ENCODE measurements at regions of chr20 and their contacts with region 1.

Region 1: GRCh38 chr20:44609511-44610312 is 27.3 kb downstream of the PKIG start:
- DNase-seq: peak; percentile 71
- H3K4me3 Mint-ChIP-seq: no peak overlapping the region
- H3K27ac Mint-ChIP-seq: peak overlapping the region; percentile 72
- H3K4me1 Mint-ChIP-seq: peaks cover 9% of the 10 kb centered on the region
- H3K27me3 Mint-ChIP-seq: no peaks in the 10 kb centered on the region

Region 2: DNA sequence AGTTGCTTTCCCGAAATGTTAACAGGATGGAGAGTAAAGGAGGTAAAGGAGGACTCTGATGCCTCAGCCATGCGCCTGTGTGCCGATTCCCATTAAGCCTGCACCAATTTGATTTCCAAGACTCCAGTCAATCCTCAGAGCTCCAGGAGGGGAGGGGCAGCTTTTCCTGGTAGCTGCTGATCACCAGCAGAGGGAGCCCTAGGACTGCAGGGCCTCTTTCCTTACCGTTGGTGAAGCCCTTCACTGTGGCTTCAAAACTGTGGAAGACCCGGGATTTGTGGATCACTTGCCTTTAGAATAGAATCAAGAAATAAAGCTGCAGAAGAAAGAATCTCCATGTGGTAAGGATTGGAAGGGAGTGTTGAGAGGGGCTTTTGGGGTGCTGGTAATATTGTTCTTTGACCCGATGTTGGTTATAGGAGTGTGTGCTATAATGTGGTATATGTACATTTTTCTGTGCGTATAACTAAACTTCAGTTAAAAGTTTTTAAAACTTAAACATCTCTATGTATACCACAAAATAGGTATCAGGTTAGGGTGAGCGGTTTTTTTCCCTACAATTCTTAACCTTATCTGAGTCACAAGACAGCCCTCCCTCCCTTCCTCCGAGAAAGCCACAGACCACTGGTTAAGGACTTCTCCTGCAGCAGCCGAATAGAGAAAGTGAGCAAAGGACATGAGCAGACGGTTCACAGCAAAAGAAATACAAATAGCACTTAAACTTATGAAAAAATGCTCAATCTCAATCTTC is 392.2 kb before region 1 on chr20:
- intact Hi-C with region 1: loop called (anchors 5 kb)
- DNase-seq: peak; percentile 58
- H3K4me3 Mint-ChIP-seq: peak overlapping the region; percentile 81
- H3K27ac Mint-ChIP-seq: peak overlapping the region; percentile 72
- H3K4me1 Mint-ChIP-seq: peaks cover 45% of the 10 kb centered on the region
- H3K27me3 Mint-ChIP-seq: no peaks in the 10 kb centered on the region

Region 3: GRCh38 chr20:44475694-44476560 is 133.8 kb before region 1 on chr20 and contains the start of gene TTPAL:
- intact Hi-C with region 1: loop called (anchors 5 kb)
- DNase-seq: peak; percentile 86
- H3K4me3 Mint-ChIP-seq: peak within 1 kb of the TSS; percentile 95
- H3K27ac Mint-ChIP-seq: peak within 1 kb of the TSS; percentile 94
- H3K4me1 Mint-ChIP-seq: peaks cover 17% of the 10 kb centered on the region
- H3K27me3 Mint-ChIP-seq: no peaks in the 10 kb centered on the region
- total RNA-seq, gene TTPAL: 19.7 and 20.8 TPM in 2 replicates

Region 4: DNA sequence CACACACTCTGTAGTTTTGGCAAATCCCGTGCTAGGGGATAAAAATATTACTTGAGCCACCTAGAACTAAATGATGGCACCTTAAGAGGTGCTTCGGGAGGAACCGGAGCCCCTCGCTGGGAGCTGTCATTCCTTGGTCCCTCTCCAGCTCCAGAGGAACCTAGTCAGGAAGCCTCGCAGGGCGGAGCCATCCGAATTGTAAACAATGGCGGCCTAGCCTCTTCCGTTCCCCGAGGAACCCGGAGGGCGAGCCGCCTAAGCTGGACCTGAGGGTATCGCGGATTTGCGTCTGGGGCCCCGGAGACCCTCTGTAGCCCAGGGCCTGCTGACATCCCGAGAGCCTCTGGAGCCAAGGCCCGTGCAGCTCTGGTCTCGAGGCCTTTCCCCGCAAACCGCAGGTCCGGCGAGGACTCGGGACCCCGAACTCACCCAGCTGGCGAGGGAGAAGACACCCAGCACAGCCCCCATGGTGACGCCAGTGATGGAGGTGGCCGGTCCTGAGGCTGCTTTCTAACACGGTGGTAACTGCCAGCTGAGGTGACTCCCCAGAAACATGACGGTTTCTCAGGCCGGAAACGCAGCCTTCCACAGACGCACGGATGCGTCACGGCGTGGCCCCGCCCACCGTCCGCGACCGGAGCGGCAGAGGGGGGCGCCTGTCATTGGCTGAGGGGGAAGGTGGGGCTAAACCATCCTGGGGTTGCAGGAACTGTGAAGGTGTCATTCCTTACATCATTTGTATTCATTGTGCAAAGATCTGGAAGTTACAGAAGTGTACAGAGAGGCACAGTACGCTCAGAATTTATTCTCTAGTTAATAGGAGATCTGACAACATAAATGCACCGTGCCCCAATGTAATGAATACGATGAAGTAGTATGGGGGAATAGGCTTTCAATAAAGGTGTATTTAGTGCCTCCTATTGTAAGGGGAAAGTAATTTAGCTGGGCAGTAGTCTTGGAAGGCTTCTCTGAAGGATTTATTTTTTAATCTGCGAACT is 87.9 kb before region 1 on chr20 and contains the start of gene SERINC3:
- intact Hi-C with region 1: loop called (anchors 1 kb)
- DNase-seq: peak; percentile 96
- H3K4me3 Mint-ChIP-seq: peak within 1 kb of the TSS; percentile 81
- H3K27ac Mint-ChIP-seq: peak within 1 kb of the TSS; percentile 79
- H3K4me1 Mint-ChIP-seq: peaks cover 38% of the 10 kb centered on the region
- H3K27me3 Mint-ChIP-seq: no peaks in the 10 kb centered on the region
- total RNA-seq, gene SERINC3: 51.2 and 52.5 TPM in 2 replicates

Region 5: DNA sequence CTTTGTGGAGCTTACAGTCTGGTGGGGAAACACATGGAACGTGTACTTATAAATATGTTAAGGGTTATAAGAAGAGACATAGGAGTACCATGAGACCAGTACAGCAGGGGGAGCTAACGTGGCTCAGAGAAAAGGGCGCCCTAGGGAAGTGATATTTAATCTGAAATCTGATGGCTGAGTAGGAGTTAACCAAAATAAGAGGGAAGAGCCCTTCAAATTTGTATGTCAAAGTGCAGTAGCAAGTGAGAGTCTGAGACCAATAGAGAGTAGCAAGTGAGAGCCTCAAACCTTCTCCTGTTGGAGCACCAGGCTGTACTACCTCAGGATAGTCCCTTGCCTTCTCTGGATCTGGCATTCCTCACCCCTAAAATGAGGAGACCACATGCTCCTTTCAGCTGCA is 33.4 kb before region 1 on chr20:
- intact Hi-C with region 1: loop called (anchors 5 kb)
- DNase-seq: no peak
- H3K4me3 Mint-ChIP-seq: no peak overlapping the region
- H3K27ac Mint-ChIP-seq: peak overlapping the region; percentile 58
- H3K4me1 Mint-ChIP-seq: peaks cover 37% of the 10 kb centered on the region
- H3K27me3 Mint-ChIP-seq: no peaks in the 10 kb centered on the region

Region 6: GRCh38 chr20:44642203-44643153 is 32.8 kb after region 1 on chr20:
- intact Hi-C with region 1: no loop called
- DNase-seq: no peak
- H3K4me3 Mint-ChIP-seq: peak overlapping the region; percentile 14
- H3K27ac Mint-ChIP-seq: peak overlapping the region; percentile 87
- H3K4me1 Mint-ChIP-seq: peaks cover 60% of the 10 kb centered on the region
- H3K27me3 Mint-ChIP-seq: no peaks in the 10 kb centered on the region

Region 7: DNA sequence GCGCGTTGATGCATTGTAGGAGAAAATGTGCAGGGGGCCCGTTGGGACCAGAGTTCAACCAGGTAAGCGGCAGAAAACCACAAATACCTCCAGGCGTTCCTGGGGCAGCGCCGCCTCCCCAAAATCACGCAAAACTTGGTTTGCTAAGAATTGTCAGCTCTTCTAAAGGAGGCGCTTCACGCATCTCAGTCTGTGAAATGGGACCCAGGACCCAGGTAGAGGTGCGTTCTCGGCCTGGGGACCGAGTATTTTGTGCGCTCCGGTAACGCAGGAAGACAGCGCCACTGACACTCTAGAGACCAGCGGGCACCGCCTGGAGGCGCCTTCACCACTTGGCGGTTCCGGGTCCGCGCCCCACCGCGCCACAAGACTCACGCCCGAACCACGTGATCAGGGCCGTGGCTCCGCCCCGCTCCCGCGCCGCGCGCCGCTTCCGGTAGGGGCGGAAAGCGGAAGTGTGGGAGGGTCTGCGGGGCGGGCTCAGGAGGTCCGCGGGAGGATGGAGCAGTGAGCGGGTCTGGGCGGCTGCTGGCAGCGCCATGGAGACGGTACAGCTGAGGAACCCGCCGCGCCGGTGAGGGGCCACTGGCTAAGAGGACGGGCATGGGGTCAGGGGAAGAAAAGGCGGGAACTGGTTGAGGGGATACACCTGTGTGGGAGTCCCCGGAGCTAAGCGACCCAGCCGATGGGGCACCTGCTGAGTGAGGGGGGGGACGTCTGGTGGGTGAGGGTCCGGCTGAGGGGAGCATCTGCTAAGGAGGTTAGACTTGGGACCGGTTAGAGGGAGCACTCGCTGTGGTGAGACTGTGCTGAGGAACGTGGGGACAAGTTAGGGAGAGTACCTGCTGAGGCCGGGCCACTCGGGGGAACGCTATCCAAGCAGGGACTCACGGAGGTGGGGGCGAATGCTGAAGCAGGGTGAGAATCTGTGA is 356.6 kb after region 1 on chr20 and contains the start of gene STK4:
- intact Hi-C with region 1: no loop called
- DNase-seq: peak; percentile 94
- H3K4me3 Mint-ChIP-seq: peak within 1 kb of the TSS; percentile 99
- H3K27ac Mint-ChIP-seq: peak within 1 kb of the TSS; percentile 94
- H3K4me1 Mint-ChIP-seq: peaks cover 57% of the 10 kb centered on the region
- H3K27me3 Mint-ChIP-seq: no peaks in the 10 kb centered on the region
- total RNA-seq, gene STK4: 147 and 149 TPM in 2 replicates